CD8-positive, alpha-beta T cell (primary cell): ENCODE measurements at regions of chrX and their contacts with region 1.

Region 1: DNA sequence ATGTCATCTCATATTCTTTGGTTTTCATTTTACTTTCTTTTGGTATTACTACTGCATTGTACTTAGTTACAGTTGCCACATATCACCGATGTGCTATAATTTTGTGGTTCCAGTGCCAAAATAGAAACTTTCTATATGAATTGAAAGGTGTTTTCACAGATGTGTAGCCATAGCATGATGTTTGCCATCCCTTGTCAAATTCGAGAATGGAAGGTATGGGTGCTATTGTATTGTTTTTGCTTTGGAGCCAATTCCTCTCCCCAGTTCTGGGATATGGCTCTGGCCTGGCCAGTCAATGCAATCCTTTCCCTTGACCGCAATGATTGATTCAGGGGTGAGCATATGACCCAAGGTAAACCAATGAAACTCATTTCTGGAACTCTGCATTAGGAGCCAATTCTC is 86.2 kb upstream of the RPS6KA3 start:
- DNase-seq: no peak
- ATAC-seq: no peak
- H3K4me3 ChIP-seq: no peak overlapping the region
- H3K4me3 Mint-ChIP-seq: no peak overlapping the region
- H3K27ac ChIP-seq: no peak overlapping the region
- H3K27ac Mint-ChIP-seq: no peak overlapping the region
- H3K4me1 ChIP-seq: peaks cover 23% of the 10 kb centered on the region
- H3K4me1 Mint-ChIP-seq: peaks cover 22% of the 10 kb centered on the region
- H3K27me3 ChIP-seq: no peaks in the 10 kb centered on the region
- H3K27me3 Mint-ChIP-seq: no peaks in the 10 kb centered on the region
- CTCF ChIP-seq: no peak

Region 2: DNA sequence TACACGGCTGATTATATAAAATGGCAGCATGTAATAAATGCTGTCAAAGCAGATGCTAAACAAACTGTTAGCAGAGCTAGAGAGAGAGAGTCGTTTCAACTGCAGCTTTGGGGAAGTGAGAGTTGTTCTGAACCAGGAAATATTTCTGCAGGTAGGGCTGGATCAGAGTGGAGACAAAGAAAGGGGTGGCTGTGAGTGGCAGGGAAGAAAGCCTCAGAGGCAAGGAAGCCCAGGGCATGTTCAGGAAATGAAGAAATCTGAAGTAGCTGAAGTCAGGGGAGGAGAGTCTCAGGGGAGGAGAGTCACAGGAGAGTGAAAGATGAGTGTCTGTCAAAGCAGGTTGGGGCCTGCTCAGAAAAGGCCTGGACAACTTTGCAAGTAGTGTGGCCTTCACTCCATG is 37.8 kb before region 1 on chrX:
- CTCF ChIA-PET with region 1: no interaction called
- POLR2A ChIA-PET with region 1: no interaction called
- intact Hi-C with region 1: loop called in 1 of 2 experiments (anchors 5 kb)
- DNase-seq: no peak
- ATAC-seq: no peak
- H3K4me3 ChIP-seq: no peak overlapping the region
- H3K4me3 Mint-ChIP-seq: no peak overlapping the region
- H3K27ac ChIP-seq: no peak overlapping the region
- H3K27ac Mint-ChIP-seq: peak overlapping the region; percentile 74
- H3K4me1 ChIP-seq: peaks cover 4% of the 10 kb centered on the region
- H3K4me1 Mint-ChIP-seq: peaks cover 18% of the 10 kb centered on the region
- H3K27me3 ChIP-seq: no peaks in the 10 kb centered on the region
- H3K27me3 Mint-ChIP-seq: no peaks in the 10 kb centered on the region
- CTCF ChIP-seq: no peak